ENCODE measurements at regions of chr9 and their contacts with region 1.

Region 1: GRCh38 chr9:112379177-112380101 is 469 bp upstream of the HSDL2 start:
- DNase-seq: peak; percentile 99 to 100 (median 99)
- H3K4me3 ChIP-seq: peak overlapping the region; percentile 62
- H3K27ac ChIP-seq: peak overlapping the region; percentile 88 to 95
- H3K4me1 ChIP-seq: peaks cover 15% of the 10 kb centered on the region
- H3K27me3 ChIP-seq: no peaks in the 10 kb centered on the region
- CTCF ChIP-seq: no peak
- EP300 ChIP-seq: no peak
- POLR2A ChIP-seq: peak; percentile 85

Region 2: DNA sequence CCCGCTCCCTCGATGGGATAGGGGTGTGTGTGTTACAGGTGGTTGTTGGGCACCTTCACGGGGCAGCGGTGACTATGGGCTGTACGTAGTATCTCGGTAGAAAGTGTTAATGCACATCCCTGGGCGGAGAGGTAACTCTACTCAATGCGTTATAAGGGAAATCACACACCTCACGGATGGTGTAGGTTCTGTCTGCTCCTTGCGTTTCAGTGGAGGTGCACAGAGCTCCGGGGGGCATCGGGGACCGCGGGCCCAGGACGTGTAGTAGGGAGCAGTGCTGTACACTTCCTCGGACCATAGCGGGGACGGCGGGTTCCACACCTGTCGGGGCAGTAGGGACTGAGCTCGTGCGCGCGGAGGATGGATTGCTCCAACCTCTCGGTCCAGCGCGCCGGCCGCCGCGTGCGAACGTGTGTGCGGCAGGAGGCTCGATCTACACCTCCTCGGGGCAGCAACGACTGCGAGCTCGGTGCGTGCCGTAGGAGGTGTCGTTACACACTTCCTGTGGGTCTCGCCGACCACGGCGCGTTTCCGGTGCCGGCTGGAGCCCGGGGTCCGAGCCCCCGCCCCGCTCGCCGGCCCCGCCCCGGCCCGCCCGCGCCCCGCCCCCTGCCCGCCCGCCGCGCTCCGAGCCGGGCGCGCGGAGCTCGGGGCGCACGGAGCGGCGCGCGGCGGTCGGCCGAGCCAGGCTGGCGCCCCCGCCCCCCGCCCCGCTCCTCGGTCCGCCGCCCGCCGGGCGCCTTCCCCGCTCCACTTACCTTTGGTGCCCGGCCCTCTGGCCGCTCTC is 107.0 kb after region 1 on chr9 and contains the start of gene KIAA1958:
- intact Hi-C with region 1: loop called in 1 of 4 experiments (anchors 10 kb)
- DNase-seq: peak; percentile 83 to 89 (median 86)
- H3K4me3 ChIP-seq: peak within 1 kb of the TSS; percentile 87
- H3K27ac ChIP-seq: peak within 1 kb of the TSS; percentile 92 to 97
- H3K4me1 ChIP-seq: peaks cover 4% of the 10 kb centered on the region
- H3K27me3 ChIP-seq: no peaks in the 10 kb centered on the region
- CTCF ChIP-seq: peak in 1 of 3 donors; percentile 20
- EP300 ChIP-seq: no peak
- POLR2A ChIP-seq: peak; percentile 64
- total RNA-seq, gene KIAA1958: 14.8 to 40.3 (median 24.6) TPM

Region 3: GRCh38 chr9:112705768-112706427 is 326.5 kb after region 1 on chr9:
- intact Hi-C with region 1: loop called in 1 of 4 experiments (anchors 10 kb)
- DNase-seq: peak in 4 of 5 donors; percentile 38 to 71 (median 57)
- H3K4me3 ChIP-seq: no peak overlapping the region
- H3K27ac ChIP-seq: no peak overlapping the region
- H3K4me1 ChIP-seq: peaks cover 2% of the 10 kb centered on the region
- H3K27me3 ChIP-seq: no peaks in the 10 kb centered on the region
- CTCF ChIP-seq: peak; percentile 31 to 56 (median 35)
- EP300 ChIP-seq: no peak
- POLR2A ChIP-seq: no peak

Measured in ovary (tissue), 10 donors.